PC-3 (cell line): ENCODE measurements at regions of chr18 and their contacts with region 1.

Region 1: DNA sequence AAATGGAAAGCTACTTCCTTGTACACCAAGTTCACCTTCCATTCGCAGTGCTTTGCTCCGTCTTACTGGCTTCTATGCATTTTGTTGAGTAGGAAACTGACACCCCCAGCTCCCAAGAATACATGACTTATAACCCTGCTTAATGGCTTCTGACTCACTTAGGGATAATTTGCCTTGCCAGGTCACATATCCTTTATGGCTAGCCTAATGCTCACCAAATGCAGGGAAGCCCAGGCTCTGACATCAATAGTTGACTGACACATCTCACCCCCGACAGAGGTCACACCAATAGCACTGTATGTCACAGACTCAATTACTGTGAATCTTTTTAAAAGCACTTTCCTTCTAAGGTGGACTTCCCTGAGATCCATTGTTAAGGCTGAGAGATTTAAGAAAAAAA is 147.2 kb downstream of the DTNA start:
- DNase-seq: peak; percentile 6
- ATAC-seq: no peak
- H3K4me3 ChIP-seq: no peak overlapping the region
- H3K27ac ChIP-seq: no peak overlapping the region
- H3K4me1 ChIP-seq: peaks cover 7% of the 10 kb centered on the region; the same call in 1 of the 2 replicates
- H3K27me3 ChIP-seq: no peaks in the 10 kb centered on the region
- CTCF ChIP-seq: no peak

Region 2: GRCh38 chr18:34258176-34258575 is 599.1 kb before region 1 on chr18:
- CTCF ChIA-PET with region 1: no interaction called
- POLR2A ChIA-PET with region 1: no interaction called
- intact Hi-C with region 1: no loop called
- DNase-seq: no peak
- ATAC-seq: no peak
- H3K4me3 ChIP-seq: no peak overlapping the region
- H3K27ac ChIP-seq: no peak overlapping the region
- H3K4me1 ChIP-seq: no peaks in the 10 kb centered on the region
- H3K27me3 ChIP-seq: no peaks in the 10 kb centered on the region
- CTCF ChIP-seq: no peak

Region 3: GRCh38 chr18:34807106-34807796 is 50.1 kb before region 1 on chr18:
- CTCF ChIA-PET with region 1: no interaction called
- POLR2A ChIA-PET with region 1: no interaction called
- intact Hi-C with region 1: loop called (anchors 1 kb)
- DNase-seq: peak; percentile 73
- ATAC-seq: peak; percentile 96
- H3K4me3 ChIP-seq: no peak overlapping the region
- H3K27ac ChIP-seq: peak overlapping the region; percentile 47
- H3K4me1 ChIP-seq: peaks cover 14% of the 10 kb centered on the region
- H3K27me3 ChIP-seq: no peaks in the 10 kb centered on the region
- CTCF ChIP-seq: no peak

Region 4: GRCh38 chr18:34880882-34881834 is 23.8 kb after region 1 on chr18:
- CTCF ChIA-PET with region 1: interaction called, 11 read pairs
- POLR2A ChIA-PET with region 1: no interaction called
- intact Hi-C with region 1: no loop called
- DNase-seq: no peak
- ATAC-seq: no peak
- H3K4me3 ChIP-seq: no peak overlapping the region
- H3K27ac ChIP-seq: no peak overlapping the region
- H3K4me1 ChIP-seq: no peaks in the 10 kb centered on the region
- H3K27me3 ChIP-seq: no peaks in the 10 kb centered on the region
- CTCF ChIP-seq: peak; percentile 30; the same call in 1 of the 2 replicates